Aorta (tissue), 5 donors: ENCODE measurements at regions of chr10 and their contacts with region 1.

Region 1: DNA sequence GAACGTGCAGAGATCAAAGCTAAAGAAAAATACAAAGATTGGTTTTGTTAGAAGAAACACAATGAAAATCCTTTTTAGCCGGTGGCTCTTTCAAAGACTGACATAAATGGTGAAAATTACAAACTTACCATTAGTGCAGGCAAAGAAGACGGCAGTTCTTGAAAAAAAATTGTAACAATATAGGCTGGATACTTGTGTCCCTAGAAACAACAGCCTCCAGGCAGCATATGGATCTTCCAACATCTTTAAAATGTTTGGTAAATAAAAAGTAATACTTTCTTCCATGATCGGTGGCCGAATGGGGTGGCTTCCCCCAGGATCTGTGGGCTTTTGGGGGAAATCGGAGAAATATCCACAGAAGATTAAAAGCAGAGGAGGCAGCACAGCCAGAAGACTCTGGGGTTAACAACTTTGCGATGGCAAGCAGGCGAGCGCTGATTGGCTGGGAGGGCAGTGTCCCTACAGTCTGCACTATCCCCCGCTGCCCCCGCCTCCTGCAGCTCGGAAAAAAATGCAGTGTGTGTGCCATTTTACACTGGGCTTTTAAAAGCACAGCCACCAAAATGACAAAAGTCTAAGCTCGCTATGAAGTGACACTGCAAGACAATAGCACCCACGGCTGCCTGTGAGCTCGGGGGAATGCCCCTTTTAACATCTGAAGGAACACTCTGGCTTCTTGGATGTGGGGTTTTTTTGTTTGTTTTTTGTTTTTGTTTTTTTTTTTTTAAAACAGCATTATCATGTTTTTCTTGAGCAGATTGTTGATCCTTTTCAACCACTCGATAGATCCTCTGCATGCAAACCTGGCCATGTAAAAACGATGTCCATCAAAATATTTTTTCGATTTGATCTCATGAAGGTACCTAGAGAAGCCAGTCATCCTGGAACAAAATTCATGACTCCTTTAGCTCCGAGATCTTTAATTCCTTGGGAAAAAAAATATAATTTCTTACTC is 31.7 kb upstream of the EPC1 start:
- DNase-seq: peak; percentile 96 to 97
- ATAC-seq: peak; percentile 98
- H3K4me3 ChIP-seq: peak overlapping the region; percentile 89 to 99
- H3K27ac ChIP-seq: peak overlapping the region; percentile 30 to 38
- H3K4me1 ChIP-seq: no peaks in the 10 kb centered on the region
- H3K27me3 ChIP-seq: no peaks in the 10 kb centered on the region

Region 2: DNA sequence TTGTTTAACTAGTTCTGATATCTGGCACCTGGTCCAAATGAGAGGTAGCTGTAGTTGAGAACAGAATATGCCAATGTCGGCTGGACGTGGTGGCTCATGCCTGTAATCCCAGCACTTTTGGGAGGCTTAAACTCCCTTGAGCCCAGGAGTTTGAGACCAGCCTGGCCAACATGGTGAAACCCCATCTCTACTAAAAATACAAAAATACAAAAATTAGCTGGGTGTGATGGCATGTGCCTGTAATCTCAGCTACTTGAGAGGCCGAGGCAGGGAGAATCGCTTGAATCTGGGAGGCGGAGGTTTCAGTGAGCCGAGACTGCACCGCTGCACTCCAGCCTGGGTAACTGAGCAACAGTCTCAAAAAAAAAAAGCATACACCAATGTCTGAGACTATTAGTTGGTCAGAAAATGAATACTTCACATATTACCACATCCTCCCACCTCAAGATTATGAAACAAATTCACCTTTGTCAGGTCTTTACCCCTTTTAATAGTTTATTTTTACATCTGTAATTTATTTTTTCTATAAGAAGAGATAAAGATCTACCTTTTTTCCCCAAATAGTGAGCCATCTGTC is 70.5 kb before region 1 on chr10:
- intact Hi-C with region 1: no loop called
- DNase-seq: no peak
- ATAC-seq: no peak
- H3K4me3 ChIP-seq: no peak overlapping the region
- H3K27ac ChIP-seq: peak overlapping the region in 1 of 2 donors; percentile 19
- H3K4me1 ChIP-seq: peaks cover 0 to 3% of the 10 kb centered on the region in 2 donors
- H3K27me3 ChIP-seq: no peaks in the 10 kb centered on the region

Region 3: GRCh38 chr10:32445740-32446535 is 67.3 kb after region 1 on chr10 and contains the start of gene CCDC7:
- intact Hi-C with region 1: loop called in 1 of 2 experiments (anchors 2 kb)
- DNase-seq: peak; percentile 91 to 94
- ATAC-seq: peak; percentile 97
- H3K4me3 ChIP-seq: peak within 1 kb of the TSS; percentile 69 to 98
- H3K27ac ChIP-seq: peak within 1 kb of the TSS; percentile 95 to 97
- H3K4me1 ChIP-seq: no peaks in the 10 kb centered on the region
- H3K27me3 ChIP-seq: no peaks in the 10 kb centered on the region
- total RNA-seq, gene CCDC7: 46.7 to 47.2 TPM